ENCODE measurements at regions of chr19 and their contacts with region 1.

Region 1: GRCh38 chr19:18521885-18522624 is at the start of gene ELL:
- DNase-seq: peak; percentile 100
- ATAC-seq: peak; percentile 87
- H3K4me3 ChIP-seq: peak within 1 kb of the TSS; percentile 79
- H3K4me3 Mint-ChIP-seq: peak within 1 kb of the TSS; percentile 97
- H3K27ac ChIP-seq: peak within 1 kb of the TSS; percentile 90 to 95
- H3K27ac Mint-ChIP-seq: peak within 1 kb of the TSS; percentile 86
- H3K4me1 ChIP-seq: peaks cover 46% of the 10 kb centered on the region
- H3K4me1 Mint-ChIP-seq: peaks cover 13% of the 10 kb centered on the region
- H3K27me3 ChIP-seq: no peaks in the 10 kb centered on the region
- H3K27me3 Mint-ChIP-seq: no peaks in the 10 kb centered on the region
- CTCF ChIP-seq: no peak
- total RNA-seq, gene ELL: 46.2 to 46.8 TPM

Region 2: DNA sequence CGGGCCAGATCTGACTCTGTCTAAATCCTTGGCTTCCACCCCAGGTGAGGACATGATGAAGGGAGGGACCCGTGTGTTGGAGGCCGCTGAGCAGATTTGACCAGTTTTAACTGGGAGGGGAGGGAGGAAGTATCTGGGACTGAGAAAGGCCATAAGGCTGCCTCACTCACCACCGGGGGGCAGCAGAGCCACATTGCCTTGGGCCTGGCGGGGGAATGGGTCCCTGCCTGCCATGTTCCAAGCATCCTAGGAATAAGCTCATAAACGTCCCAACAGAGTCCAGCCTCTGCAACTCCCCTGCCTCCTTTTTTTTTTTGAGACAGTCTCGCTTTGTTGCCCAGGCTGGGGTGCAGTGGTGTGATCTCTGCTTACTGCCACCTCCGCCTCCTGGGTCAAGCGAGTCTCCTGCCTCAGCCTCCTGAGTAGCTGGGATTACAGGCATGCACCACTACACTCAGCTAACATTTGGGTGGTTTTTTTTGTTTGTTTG is 409.0 kb before region 1 on chr19:
- CTCF ChIA-PET with region 1: no interaction called
- POLR2A ChIA-PET with region 1: no interaction called
- intact Hi-C with region 1: no loop called
- DNase-seq: peak; percentile 45 to 88 (median 76)
- ATAC-seq: peak; percentile 23
- H3K4me3 ChIP-seq: no peak overlapping the region
- H3K4me3 Mint-ChIP-seq: peak overlapping the region; percentile 40
- H3K27ac ChIP-seq: no peak overlapping the region
- H3K27ac Mint-ChIP-seq: no peak overlapping the region
- H3K4me1 ChIP-seq: peaks cover 42% of the 10 kb centered on the region
- H3K4me1 Mint-ChIP-seq: peaks cover 35% of the 10 kb centered on the region
- H3K27me3 ChIP-seq: no peaks in the 10 kb centered on the region
- H3K27me3 Mint-ChIP-seq: no peaks in the 10 kb centered on the region
- CTCF ChIP-seq: peak; percentile 82

Region 3: DNA sequence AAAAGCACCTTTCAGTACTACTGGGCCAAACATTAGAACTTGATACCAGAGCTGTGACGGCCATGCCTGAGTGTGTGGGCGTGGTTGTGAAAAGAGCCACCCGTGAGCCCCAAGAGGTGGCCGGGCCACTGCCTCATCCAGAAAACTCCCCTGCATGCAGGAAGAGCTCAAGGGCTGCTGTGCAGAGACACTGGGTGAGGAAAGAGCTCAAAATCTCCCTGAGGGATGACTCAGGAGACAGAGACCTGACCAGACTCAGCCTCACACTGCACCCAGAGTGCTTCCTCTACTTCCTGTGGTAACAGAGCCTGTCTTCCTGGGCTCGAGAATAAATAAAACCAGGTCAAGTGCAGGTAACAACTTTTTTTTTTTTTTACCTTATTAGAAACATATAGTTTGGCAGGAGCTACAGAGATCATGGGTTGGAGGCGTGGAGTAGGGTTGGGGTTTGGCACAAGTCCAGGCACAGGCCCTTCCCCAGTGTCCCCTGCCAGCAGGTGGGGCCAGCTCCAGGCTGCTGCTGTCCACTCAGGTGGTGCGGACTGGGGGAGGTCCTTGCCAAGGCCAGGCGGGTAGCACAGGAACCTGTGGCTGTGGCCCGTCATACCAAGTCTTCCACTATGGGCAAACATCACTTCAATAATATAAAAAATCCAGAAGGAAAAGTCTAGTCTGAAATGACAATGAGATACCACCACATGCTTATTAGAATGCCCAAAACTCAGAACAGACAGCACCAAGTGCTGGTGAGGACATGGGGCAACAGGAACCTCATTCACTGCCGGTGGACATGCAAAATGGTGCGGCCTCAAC is 25.7 kb before region 1 on chr19:
- CTCF ChIA-PET with region 1: interaction called, 35 read pairs
- POLR2A ChIA-PET with region 1: interaction called, 14 read pairs
- intact Hi-C with region 1: no loop called
- DNase-seq: peak; percentile 30 to 95 (median 54)
- ATAC-seq: peak; percentile 90
- H3K4me3 ChIP-seq: peak overlapping the region; percentile 17
- H3K4me3 Mint-ChIP-seq: peak overlapping the region; percentile 79
- H3K27ac ChIP-seq: peak overlapping the region; percentile 77 to 82
- H3K27ac Mint-ChIP-seq: peak overlapping the region; percentile 90
- H3K4me1 ChIP-seq: peaks cover 100% of the 10 kb centered on the region
- H3K4me1 Mint-ChIP-seq: peaks cover 78% of the 10 kb centered on the region
- H3K27me3 ChIP-seq: no peaks in the 10 kb centered on the region
- H3K27me3 Mint-ChIP-seq: no peaks in the 10 kb centered on the region
- CTCF ChIP-seq: no peak

Region 4: DNA sequence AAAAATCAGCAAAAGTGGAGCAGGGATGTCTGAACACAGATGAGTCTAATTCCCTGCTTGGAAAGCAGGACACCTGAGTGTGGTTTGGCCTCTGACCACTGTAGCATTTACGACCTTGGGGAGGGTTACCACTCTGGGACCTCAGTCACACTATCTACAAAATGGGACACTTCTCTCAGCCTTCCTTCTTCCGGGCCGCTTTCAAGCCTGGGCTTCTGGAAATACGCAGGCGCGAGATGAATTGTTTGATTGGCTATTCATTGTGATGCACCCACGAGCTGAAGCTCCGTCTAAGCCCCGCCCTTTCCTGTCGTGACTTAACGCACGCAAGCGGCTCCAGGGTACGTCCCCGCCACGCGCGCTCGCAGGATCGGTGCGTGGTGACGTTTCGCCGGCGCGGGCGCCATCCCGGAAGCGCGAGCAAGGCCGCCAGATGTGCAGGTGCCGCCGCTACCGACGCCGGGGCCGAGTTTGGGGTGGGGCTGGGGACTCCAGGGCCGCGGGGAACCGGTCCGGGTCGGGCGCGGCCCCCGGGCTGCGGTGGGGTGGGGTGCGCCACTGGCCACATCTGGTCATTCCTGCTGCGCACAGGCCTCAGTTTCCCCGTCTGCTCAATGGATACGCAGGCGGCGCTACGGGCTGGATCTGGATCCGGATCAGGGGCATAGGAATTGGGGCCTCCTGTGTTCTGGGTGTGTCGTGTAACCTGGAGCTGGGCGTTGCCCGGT is 35.6 kb after region 1 on chr19 and contains the start of gene KXD1:
- CTCF ChIA-PET with region 1: interaction called, 12 read pairs
- POLR2A ChIA-PET with region 1: interaction called, 41 read pairs
- intact Hi-C with region 1: loop called (anchors 1 to 2 kb)
- DNase-seq: peak; percentile 93 to 100 (median 97)
- ATAC-seq: peak; percentile 99
- H3K4me3 ChIP-seq: peak within 1 kb of the TSS; percentile 99
- H3K4me3 Mint-ChIP-seq: peak within 1 kb of the TSS; percentile 94
- H3K27ac ChIP-seq: peak within 1 kb of the TSS; percentile 94 to 97
- H3K27ac Mint-ChIP-seq: peak within 1 kb of the TSS; percentile 98
- H3K4me1 ChIP-seq: peaks cover 30% of the 10 kb centered on the region
- H3K4me1 Mint-ChIP-seq: peaks cover 26% of the 10 kb centered on the region
- H3K27me3 ChIP-seq: no peaks in the 10 kb centered on the region
- H3K27me3 Mint-ChIP-seq: no peaks in the 10 kb centered on the region
- CTCF ChIP-seq: no peak
- total RNA-seq, gene KXD1: 64.2 to 66.9 TPM

Region 5: GRCh38 chr19:18594096-18594823 is 72.2 kb after region 1 on chr19:
- CTCF ChIA-PET with region 1: interaction called, 17 read pairs
- POLR2A ChIA-PET with region 1: interaction called, 59 read pairs
- intact Hi-C with region 1: loop called (anchors 1 to 5 kb)
- DNase-seq: peak; percentile 59 to 91 (median 70)
- ATAC-seq: peak; percentile 74
- H3K4me3 ChIP-seq: peak overlapping the region; percentile 52
- H3K4me3 Mint-ChIP-seq: peak overlapping the region; percentile 63
- H3K27ac ChIP-seq: no peak overlapping the region
- H3K27ac Mint-ChIP-seq: peak overlapping the region; percentile 42
- H3K4me1 ChIP-seq: peaks cover 40% of the 10 kb centered on the region
- H3K4me1 Mint-ChIP-seq: peaks cover 25% of the 10 kb centered on the region
- H3K27me3 ChIP-seq: peaks cover 3 to 8% of the 10 kb centered on the region in 2 experiments
- H3K27me3 Mint-ChIP-seq: peaks cover 4% of the 10 kb centered on the region
- CTCF ChIP-seq: peak; percentile 73

Region 6: GRCh38 chr19:18700501-18701249 is 178.6 kb after region 1 on chr19:
- CTCF ChIA-PET with region 1: no interaction called
- POLR2A ChIA-PET with region 1: interaction called, 4 read pairs
- intact Hi-C with region 1: loop called in 1 of 2 experiments (anchors 10 kb)
- DNase-seq: peak; percentile 59 to 81 (median 70)
- ATAC-seq: peak; percentile 97
- H3K4me3 ChIP-seq: peak overlapping the region; percentile 66
- H3K4me3 Mint-ChIP-seq: peak overlapping the region; percentile 91
- H3K27ac ChIP-seq: peak overlapping the region; percentile 59 to 87
- H3K27ac Mint-ChIP-seq: peak overlapping the region; percentile 88
- H3K4me1 ChIP-seq: peaks cover 43% of the 10 kb centered on the region
- H3K4me1 Mint-ChIP-seq: peaks cover 42% of the 10 kb centered on the region
- H3K27me3 ChIP-seq: no peaks in the 10 kb centered on the region
- H3K27me3 Mint-ChIP-seq: no peaks in the 10 kb centered on the region
- CTCF ChIP-seq: no peak

Region 7: DNA sequence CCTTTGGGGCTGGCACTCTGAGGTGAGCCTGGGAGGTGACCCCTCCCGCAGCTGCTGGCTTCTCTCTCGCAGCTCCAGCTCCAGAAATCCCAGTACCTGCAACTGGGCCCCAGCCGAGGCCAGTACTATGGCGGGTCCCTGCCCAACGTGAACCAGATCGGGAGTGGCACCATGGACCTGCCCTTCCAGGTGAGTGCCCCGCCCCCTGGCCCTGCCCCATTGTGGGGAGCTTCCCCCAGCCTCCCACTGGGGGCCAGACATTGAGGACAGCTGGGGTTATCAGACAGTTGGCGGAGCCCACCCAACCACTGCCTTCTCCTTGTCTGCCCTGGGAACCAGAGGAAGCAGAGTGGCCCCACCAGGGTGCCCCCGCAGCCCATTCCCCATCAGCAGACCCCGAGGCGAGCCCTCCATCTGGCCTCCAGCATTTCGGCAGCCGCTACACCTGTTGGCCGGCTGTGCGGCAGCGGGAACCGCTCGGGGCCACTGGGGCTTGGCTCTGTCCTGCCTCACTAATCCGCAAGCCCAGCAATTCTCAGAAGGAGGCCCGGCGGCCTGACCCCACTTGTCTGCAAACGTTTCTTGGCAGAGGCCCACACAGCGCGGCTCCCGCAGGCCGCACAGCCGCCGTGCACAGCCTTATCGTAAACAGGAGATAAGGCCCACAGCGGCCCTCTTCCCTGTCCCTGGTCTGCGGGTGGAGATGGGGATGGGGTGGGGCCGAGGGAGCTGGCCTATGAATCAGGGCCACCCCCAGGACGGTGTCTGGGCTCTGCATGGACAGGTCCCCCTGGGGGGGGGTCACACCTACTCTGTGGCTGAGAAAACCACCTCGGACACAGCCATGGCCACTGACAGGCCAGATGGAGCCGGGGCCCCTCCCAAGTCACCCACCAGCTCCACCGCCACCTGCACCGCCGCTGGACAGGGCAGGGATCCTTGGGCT is 221.1 kb after region 1 on chr19:
- CTCF ChIA-PET with region 1: no interaction called
- POLR2A ChIA-PET with region 1: no interaction called
- intact Hi-C with region 1: no loop called
- DNase-seq: no peak
- ATAC-seq: no peak
- H3K4me3 ChIP-seq: no peak overlapping the region
- H3K4me3 Mint-ChIP-seq: no peak overlapping the region
- H3K27ac ChIP-seq: no peak overlapping the region
- H3K27ac Mint-ChIP-seq: no peak overlapping the region
- H3K4me1 ChIP-seq: no peaks in the 10 kb centered on the region
- H3K4me1 Mint-ChIP-seq: no peaks in the 10 kb centered on the region
- H3K27me3 ChIP-seq: no peaks in the 10 kb centered on the region
- H3K27me3 Mint-ChIP-seq: no peaks in the 10 kb centered on the region
- CTCF ChIP-seq: no peak

Region 8: DNA sequence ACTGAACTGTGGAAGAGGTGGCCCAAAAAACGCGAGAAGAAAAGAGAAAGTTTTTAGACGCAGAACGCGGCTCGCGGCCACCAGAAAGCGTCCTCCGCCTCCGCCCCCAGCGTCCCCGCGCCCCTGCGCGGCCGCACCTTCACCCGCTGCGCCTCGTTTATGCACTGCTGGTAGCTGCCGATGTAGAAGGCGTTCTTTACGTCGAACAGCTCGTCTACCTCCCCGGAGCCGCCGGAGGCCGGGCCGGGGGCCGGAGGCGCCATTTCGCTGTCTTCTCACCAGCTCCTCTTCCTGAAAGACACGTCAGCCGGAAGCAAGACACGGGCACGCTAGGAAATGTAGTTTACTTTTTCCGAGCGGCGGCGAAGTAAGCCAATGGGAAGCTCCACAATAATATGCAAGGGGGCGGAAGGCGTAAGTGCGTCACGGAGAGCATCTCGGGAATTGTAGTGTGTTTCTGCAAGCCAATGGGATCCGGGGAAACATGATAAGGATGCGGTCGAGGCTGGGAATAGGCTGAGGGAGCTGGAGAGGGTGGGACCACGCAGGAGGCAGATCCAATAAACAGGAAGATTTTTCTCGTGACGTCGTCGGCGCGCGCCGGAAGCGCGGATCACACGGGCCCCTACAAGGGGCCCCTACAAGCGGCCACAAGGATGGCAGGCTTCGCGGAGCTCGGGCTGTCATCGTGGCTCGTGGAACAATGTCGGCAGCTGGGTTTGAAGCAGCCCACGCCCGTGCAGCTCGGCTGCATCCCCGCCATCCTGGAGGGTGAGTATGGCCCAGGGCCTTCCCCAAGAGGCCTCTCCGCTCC is 397.2 kb after region 1 on chr19 and contains the starts of genes COPE and DDX49:
- CTCF ChIA-PET with region 1: no interaction called
- POLR2A ChIA-PET with region 1: interaction called, 8 read pairs
- intact Hi-C with region 1: loop called (anchors 2 to 5 kb)
- DNase-seq: peak; percentile 92 to 100 (median 97)
- ATAC-seq: peak; percentile 94
- H3K4me3 ChIP-seq: peak within 1 kb of the TSS; percentile 65
- H3K4me3 Mint-ChIP-seq: peak within 1 kb of the TSS; percentile 84
- H3K27ac ChIP-seq: peak within 1 kb of the TSS; percentile 92
- H3K27ac Mint-ChIP-seq: peak within 1 kb of the TSS; percentile 66
- H3K4me1 ChIP-seq: peaks cover 47% of the 10 kb centered on the region
- H3K4me1 Mint-ChIP-seq: peaks cover 42% of the 10 kb centered on the region
- H3K27me3 ChIP-seq: no peaks in the 10 kb centered on the region
- H3K27me3 Mint-ChIP-seq: no peaks in the 10 kb centered on the region
- CTCF ChIP-seq: no peak
- total RNA-seq, gene COPE: 135 to 143 TPM
- total RNA-seq, gene DDX49: 47.9 to 49.7 TPM